Esophagus squamous epithelium (tissue), 5 donors: ENCODE measurements at regions of chr4 and their contacts with region 1.

Region 1: DNA sequence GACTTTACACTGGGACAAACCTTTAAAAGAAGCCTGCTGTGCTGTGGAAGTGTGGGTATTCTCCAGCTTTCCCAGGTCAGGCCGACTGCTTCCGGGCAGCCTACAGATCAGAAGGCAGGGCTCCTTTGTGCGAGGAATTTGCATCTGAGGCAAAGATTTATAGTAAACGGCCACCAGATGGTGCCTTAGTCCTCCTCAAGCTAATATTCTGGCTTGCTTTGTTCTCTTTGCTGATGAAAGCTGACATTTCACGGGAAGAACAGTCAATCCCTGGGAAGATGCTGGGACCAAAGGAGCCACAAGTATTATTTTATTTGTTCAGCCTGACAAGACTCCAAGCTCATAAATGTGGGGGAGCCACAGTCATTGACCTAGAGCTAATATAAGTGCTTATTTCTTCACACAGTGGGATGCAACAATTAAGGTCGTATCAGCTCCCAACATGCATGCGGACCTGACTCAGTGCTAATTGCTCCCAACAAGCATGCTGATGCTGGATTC is 120.7 kb upstream of the TRIM2 start:
- DNase-seq: no peak
- H3K4me3 ChIP-seq: no peak overlapping the region
- H3K27ac ChIP-seq: peak overlapping the region in 3 of 4 donors; percentile 10 to 43 (median 40)
- H3K4me1 ChIP-seq: peaks cover 9 to 27% (median 12%) of the 10 kb centered on the region in 3 donors
- H3K27me3 ChIP-seq: no peaks in the 10 kb centered on the region
- CTCF ChIP-seq: peak; percentile 53 to 78 (median 69)
- POLR2A ChIP-seq: no peak

Region 2: GRCh38 chr4:152849350-152849749 is 234.1 kb before region 1 on chr4:
- intact Hi-C with region 1: loop called (anchors 5 kb)
- DNase-seq: no peak
- H3K4me3 ChIP-seq: no peak overlapping the region
- H3K27ac ChIP-seq: peak overlapping the region in 1 of 4 donors; percentile 29
- H3K4me1 ChIP-seq: peaks cover 0 to 28% (median 8%) of the 10 kb centered on the region in 3 donors
- H3K27me3 ChIP-seq: no peaks in the 10 kb centered on the region
- CTCF ChIP-seq: no peak
- POLR2A ChIP-seq: no peak

Region 3: GRCh38 chr4:153127760-153128494 is 44.4 kb after region 1 on chr4:
- intact Hi-C with region 1: loop called (anchors 2 kb)
- DNase-seq: peak; percentile 18
- H3K4me3 ChIP-seq: peak overlapping the region in 1 of 4 donors; percentile 43
- H3K27ac ChIP-seq: no peak overlapping the region
- H3K4me1 ChIP-seq: peaks cover 0 to 13% (median 4%) of the 10 kb centered on the region in 3 donors
- H3K27me3 ChIP-seq: no peaks in the 10 kb centered on the region
- CTCF ChIP-seq: peak; percentile 85 to 93 (median 90)
- POLR2A ChIP-seq: no peak